Posterior vena cava (tissue), 2 donors: ENCODE measurements at regions of chr11 and their contacts with region 1.

Region 1: GRCh38 chr11:32487270-32487669 is 51.9 kb upstream of the WT1 start:
- DNase-seq: no peak

Region 2: GRCh38 chr11:31437742-31438435 is 1049.4 kb before region 1 on chr11:
- intact Hi-C with region 1: loop called in 1 of 2 experiments (anchors 5 kb)
- DNase-seq: no peak

Region 3: GRCh38 chr11:32549611-32550187 is 62.4 kb after region 1 on chr11:
- intact Hi-C with region 1: loop called in 1 of 2 experiments (anchors 10 kb)
- DNase-seq: no peak